Endothelial cell of umbilical vein (primary cell): ENCODE measurements at regions of chr14 and their contacts with region 1.

Region 1: DNA sequence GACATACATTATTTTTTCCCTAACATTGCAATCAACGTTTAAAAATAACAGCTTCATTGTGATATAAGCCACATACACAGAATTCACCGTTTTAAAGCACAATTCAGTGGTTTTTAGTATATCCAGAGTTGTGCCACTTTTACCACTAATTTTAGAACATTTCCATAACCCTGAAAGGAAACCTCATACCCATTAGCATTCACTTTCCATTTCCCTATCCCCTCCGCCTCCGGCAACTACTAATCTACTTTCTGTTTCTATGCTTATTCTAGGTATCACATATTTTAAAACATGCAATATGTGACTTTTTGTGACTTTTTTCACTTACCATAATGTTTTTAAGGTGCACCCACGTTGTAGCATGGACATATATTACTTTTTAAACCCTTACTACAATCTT is 55.6 kb upstream of the ISM2 start:
- DNase-seq: no peak
- H3K4me3 ChIP-seq: no peak overlapping the region
- H3K27ac ChIP-seq: no peak overlapping the region
- H3K4me1 ChIP-seq: no peaks in the 10 kb centered on the region
- H3K27me3 ChIP-seq: no peaks in the 10 kb centered on the region
- CTCF ChIP-seq: no peak
- POLR2A ChIP-seq: no peak

Region 2: GRCh38 chr14:77151918-77152588 is 402.2 kb before region 1 on chr14:
- CTCF ChIA-PET with region 1: interaction called, 3 read pairs
- POLR2A ChIA-PET with region 1: no interaction called
- dilution Hi-C with region 1: no loop called
- intact Hi-C with region 1: loop called (anchors 10 kb)
- DNase-seq: peak; percentile 28
- H3K4me3 ChIP-seq: no peak overlapping the region
- H3K27ac ChIP-seq: no peak overlapping the region
- H3K4me1 ChIP-seq: no peaks in the 10 kb centered on the region
- H3K27me3 ChIP-seq: peaks cover 11 to 19% of the 10 kb centered on the region in 2 experiments
- CTCF ChIP-seq: no peak
- POLR2A ChIP-seq: no peak

Region 3: GRCh38 chr14:77301103-77301502 is 253.1 kb before region 1 on chr14:
- CTCF ChIA-PET with region 1: interaction called, 5 read pairs
- POLR2A ChIA-PET with region 1: no interaction called
- dilution Hi-C with region 1: no loop called
- intact Hi-C with region 1: loop called (anchors 2 kb)
- DNase-seq: peak; percentile 74
- H3K4me3 ChIP-seq: no peak overlapping the region
- H3K27ac ChIP-seq: no peak overlapping the region
- H3K4me1 ChIP-seq: peaks cover 29% of the 10 kb centered on the region
- H3K27me3 ChIP-seq: no peaks in the 10 kb centered on the region
- CTCF ChIP-seq: peak; percentile 85
- POLR2A ChIP-seq: no peak

Region 4: GRCh38 chr14:77542421-77543239 is 11.6 kb before region 1 on chr14:
- CTCF ChIA-PET with region 1: interaction called, 12 read pairs
- POLR2A ChIA-PET with region 1: no interaction called
- dilution Hi-C with region 1: no loop called
- intact Hi-C with region 1: no loop called
- DNase-seq: peak; percentile 91
- H3K4me3 ChIP-seq: peak overlapping the region in 1 of 3 experiments; percentile 47
- H3K27ac ChIP-seq: peak overlapping the region; percentile 79
- H3K4me1 ChIP-seq: peaks cover 34% of the 10 kb centered on the region
- H3K27me3 ChIP-seq: no peaks in the 10 kb centered on the region
- CTCF ChIP-seq: no peak
- POLR2A ChIP-seq: no peak

Region 5: DNA sequence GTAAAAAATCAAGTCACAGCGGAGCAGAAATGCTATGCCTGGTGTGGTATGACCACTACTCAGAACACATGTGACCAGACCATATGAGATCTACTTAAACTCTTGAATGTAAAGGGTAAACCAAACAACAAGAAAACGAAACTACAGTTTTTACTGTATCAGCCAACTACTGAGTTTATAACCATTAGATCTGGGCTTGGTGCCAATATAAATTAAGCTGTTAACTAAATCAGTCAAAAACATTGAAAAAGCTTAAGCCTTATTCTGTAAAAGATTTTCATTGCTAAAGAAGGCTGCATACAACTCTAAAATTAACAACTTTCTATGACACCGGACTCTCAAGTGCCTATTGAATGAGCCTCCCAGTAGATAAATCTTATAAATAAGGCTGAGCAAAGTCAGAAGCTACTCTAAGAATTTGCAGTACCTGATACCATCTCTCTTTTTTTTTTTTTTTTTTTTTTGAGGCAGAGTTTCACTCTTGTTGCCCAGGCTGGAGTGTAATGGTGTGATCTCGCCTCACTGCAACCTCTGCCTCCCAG is 26.8 kb after region 1 on chr14:
- CTCF ChIA-PET with region 1: interaction called, 10 read pairs
- POLR2A ChIA-PET with region 1: no interaction called
- dilution Hi-C with region 1: no loop called
- intact Hi-C with region 1: no loop called
- DNase-seq: peak; percentile 89
- H3K4me3 ChIP-seq: peak overlapping the region in 1 of 3 experiments; percentile 53
- H3K27ac ChIP-seq: peak overlapping the region; percentile 42
- H3K4me1 ChIP-seq: peaks cover 37% of the 10 kb centered on the region
- H3K27me3 ChIP-seq: no peaks in the 10 kb centered on the region
- CTCF ChIP-seq: no peak
- POLR2A ChIP-seq: no peak

Region 6: DNA sequence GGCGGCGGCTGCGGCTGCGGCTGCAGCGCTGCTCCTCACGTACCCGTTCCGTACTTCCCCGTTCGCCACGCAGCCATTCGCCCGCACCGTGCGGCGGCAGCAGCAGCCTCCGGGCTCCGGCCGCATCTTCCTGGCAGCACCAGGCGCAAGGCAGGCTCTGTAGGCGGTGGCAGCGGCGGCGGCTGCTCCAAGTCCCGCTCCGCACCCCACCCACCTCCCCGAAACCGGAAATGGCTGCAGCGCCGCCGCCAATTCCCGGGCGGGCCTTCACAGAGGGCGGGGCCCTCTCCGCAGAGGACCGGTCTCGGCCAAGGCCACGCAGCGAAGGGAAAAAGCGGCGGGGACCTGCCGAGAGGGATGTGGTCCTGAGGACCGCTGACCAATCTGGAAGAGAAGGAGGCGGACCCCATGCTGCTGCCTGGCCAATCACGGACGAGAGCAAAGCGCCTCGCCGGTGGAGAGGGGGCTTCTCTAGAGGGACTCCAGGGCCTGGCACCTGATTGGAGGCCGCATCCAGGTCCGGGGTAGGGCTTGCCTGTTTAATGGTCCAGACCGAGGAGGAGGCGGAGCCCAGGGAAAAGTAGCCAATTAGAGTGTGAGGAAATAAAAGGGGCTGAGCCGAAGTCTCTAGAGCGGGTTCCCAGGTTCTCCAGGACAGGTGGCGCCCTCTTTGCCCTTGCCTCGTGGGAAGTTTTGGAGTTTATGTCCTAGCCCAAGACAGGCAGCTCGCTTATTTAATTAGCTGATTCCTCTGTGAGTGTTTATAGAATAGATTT is 62.4 kb after region 1 on chr14 and contains the start of gene SPTLC2:
- CTCF ChIA-PET with region 1: interaction called, 8 read pairs
- POLR2A ChIA-PET with region 1: no interaction called
- dilution Hi-C with region 1: no loop called
- intact Hi-C with region 1: loop called (anchors 1 kb)
- DNase-seq: peak; percentile 100
- H3K4me3 ChIP-seq: peak within 1 kb of the TSS; percentile 86 to 94 (median 90)
- H3K27ac ChIP-seq: peak within 1 kb of the TSS; percentile 14
- H3K4me1 ChIP-seq: peaks cover 25% of the 10 kb centered on the region
- H3K27me3 ChIP-seq: peaks cover 0 to 4% of the 10 kb centered on the region in 2 experiments
- CTCF ChIP-seq: no peak
- POLR2A ChIP-seq: peak; percentile 76
- total RNA-seq, gene SPTLC2: 57.2 and 71.3 TPM in 2 replicates

Region 7: GRCh38 chr14:77674931-77675330 is 120.7 kb after region 1 on chr14:
- CTCF ChIA-PET with region 1: no interaction called
- POLR2A ChIA-PET with region 1: no interaction called
- dilution Hi-C with region 1: no loop called
- intact Hi-C with region 1: no loop called
- DNase-seq: no peak
- H3K4me3 ChIP-seq: no peak overlapping the region
- H3K27ac ChIP-seq: no peak overlapping the region
- H3K4me1 ChIP-seq: no peaks in the 10 kb centered on the region
- H3K27me3 ChIP-seq: no peaks in the 10 kb centered on the region
- CTCF ChIP-seq: no peak
- POLR2A ChIP-seq: no peak

Region 8: DNA sequence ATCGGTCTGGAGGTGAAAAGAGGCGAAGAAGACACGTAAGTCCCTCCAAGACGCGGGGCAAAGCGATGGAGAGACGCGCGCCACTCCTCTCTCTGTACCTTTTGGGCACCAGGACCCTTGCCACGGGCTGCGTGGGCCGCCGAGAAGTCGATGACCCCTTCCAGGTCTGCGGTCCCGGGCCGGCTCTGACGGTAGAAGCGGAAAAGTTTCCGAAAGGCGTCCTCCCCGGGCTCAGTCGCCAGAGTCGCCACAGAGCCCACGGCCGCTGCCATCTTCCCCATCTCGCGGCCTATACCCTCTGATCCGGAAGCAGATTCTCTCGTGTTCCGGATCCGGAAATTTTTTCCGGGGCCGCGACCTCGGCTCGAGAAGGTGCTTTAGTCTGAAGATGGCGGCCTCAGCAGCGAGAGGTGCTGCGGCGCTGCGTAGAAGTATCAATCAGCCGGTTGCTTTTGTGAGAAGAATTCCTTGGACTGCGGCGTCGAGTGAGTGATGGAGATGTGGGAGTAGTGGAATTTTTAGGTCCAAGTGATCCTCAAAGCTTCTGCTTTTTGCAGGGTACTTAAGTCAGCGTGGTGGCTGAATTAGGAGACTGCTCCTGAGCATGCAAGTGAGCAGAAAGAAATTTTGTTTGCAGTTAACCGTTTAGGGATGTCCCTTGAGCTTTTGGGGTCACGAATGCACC is 153.7 kb after region 1 on chr14 and contains the starts of genes ALKBH1 and SLIRP:
- CTCF ChIA-PET with region 1: no interaction called
- POLR2A ChIA-PET with region 1: no interaction called
- dilution Hi-C with region 1: no loop called
- intact Hi-C with region 1: loop called (anchors 10 kb)
- DNase-seq: peak; percentile 85
- H3K4me3 ChIP-seq: peak within 1 kb of the TSS; percentile 44 to 98 (median 98)
- H3K27ac ChIP-seq: peak within 1 kb of the TSS; percentile 19
- H3K4me1 ChIP-seq: peaks cover 21% of the 10 kb centered on the region
- H3K27me3 ChIP-seq: no peaks in the 10 kb centered on the region
- CTCF ChIP-seq: no peak
- POLR2A ChIP-seq: peak; percentile 94
- total RNA-seq, gene ALKBH1: 13.1 and 14.8 TPM in 2 replicates
- total RNA-seq, gene SLIRP: 160 and 177 TPM in 2 replicates